Dorsolateral prefrontal cortex (tissue), 120 donors: ENCODE measurements at regions of chr16 and their contacts with region 1.

Region 1: GRCh38 chr16:74862741-74863244 is 88.2 kb upstream of the FA2H start:
- DNase-seq: peak in 1 of 10 donors; percentile 23
- H3K4me3 ChIP-seq: no peak overlapping the region
- H3K27ac ChIP-seq: peak overlapping the region in 24 of 59 donors; percentile 2 to 68 (median 36)
- H3K27me3 ChIP-seq: no peaks in the 10 kb centered on the region
- CTCF ChIP-seq: peak; percentile 47 to 97 (median 88)

Region 2: DNA sequence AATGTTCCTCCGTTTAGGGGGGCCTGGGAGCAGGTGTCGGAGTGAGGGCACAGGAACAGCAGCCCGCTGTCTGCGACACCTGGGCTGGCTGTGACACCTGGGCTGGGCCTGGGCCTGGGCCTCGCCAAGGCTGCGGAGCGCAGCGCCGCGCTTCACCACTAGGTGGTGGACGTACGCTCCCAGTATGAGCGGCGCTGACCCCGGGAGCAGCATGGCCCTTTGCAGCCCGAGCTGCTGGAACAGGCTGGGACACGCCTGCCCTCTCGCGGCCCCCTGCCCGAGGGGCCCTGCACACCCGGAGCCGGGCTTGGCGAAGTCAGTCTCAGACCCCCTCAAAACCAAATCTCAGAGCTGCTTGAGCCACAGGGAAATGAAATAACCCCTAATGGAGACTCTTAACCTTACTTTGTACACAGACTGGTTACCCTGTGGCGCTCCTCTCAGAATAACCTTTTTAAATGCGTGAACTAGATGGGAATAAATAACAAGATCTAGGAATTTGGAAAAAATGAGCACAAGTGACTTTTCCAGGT is 49.6 kb before region 1 on chr16:
- intact Hi-C with region 1: loop called (anchors 5 kb)
- DNase-seq: peak; percentile 58 to 84 (median 78)
- H3K4me3 ChIP-seq: peak overlapping the region in 2 of 59 donors; percentile 10 to 23
- H3K27ac ChIP-seq: peak overlapping the region in 55 of 59 donors; percentile 4 to 90 (median 71)
- H3K27me3 ChIP-seq: no peaks in the 10 kb centered on the region
- CTCF ChIP-seq: peak; percentile 45 to 100 (median 95)

Region 3: GRCh38 chr16:75206749-75207451 is 344.1 kb after region 1 on chr16 and contains the start of gene CTRB2:
- intact Hi-C with region 1: no loop called
- DNase-seq: no peak
- H3K4me3 ChIP-seq: no peak within 1 kb of the TSS
- H3K27ac ChIP-seq: no peak within 1 kb of the TSS
- H3K27me3 ChIP-seq: peaks cover 0 to 9% (median 0%) of the 10 kb centered on the region in 45 donors
- CTCF ChIP-seq: no peak
- total RNA-seq, gene CTRB2: 0.61 to 0.94 (median 0.63) TPM in 3 of 120 experiments, not detected in the others